HEK293 (cell line): ENCODE measurements at regions of chr6 and their contacts with region 1.

Region 1: DNA sequence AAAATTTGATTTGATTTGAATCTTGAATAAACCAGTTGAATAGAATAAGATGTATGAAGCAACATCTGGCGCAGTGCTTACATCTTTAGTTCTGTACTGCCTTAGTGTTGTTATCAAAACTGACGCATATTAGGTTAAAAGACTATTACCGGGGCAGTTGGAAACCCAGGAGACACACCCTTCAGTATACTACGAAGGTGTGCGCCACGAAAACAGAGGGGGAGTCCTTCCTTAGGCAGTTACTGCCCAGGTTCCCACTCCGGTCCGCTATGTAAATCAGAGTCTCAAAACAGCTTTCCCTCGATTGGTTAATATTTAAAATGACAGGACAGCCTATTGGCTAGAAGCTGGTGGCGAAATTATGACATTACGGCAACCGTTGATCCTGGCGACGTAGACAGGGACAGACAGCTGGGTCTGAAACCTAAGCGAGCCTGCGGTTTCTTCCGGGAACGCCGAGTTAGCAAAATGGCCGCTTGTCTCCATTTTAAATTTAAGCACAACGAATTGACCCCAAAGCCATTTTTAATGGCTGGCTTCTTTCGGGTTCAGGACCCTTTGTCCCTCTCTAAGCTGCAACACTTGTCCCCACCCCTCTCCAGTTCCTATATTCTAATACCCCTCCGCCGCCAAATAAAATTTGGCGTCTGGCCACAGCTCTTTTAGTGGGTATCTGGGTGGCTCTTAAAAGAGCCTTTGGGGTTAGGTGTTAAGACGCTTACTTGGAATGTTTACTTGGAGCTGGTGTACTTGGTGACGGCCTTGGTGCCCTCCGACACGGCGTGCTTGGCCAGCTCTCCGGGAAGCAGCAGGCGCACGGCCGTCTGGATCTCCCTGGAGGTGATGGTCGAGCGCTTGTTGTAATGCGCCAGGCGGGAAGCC is 35.8 kb downstream of the HFE start:
- H3K4me3 ChIP-seq: peak overlapping the region; percentile 50
- H3K27ac ChIP-seq: peak overlapping the region; percentile 60
- H3K4me1 ChIP-seq: no peaks in the 10 kb centered on the region
- CTCF ChIP-seq: no peak

Region 2: DNA sequence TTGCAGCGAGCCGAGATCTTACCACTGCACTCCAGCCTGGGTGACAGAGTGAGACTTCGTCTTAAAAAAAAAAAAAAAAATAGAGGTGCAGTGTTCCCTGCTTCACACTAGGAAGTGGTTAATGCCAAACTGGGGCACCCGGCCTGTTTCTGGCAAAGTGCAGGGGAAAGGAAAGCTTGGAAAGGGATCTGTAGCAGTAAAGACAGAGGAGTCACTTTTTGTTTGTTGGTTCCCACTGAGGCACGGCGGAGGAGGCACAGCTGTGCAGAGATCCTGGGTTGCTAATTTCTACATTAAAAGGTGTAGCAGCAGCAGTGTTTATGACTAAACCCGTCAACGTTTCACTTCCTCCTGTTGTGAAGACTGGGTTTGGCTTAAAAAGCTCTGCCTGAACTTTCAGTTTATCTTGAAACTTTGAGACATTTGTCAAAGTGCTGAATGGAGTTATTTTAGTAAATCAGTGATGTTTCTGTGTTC is 718.3 kb before region 1 on chr6:
- CTCF ChIA-PET with region 1: no interaction called
- POLR2A ChIA-PET with region 1: no interaction called
- H3K4me3 ChIP-seq: no peak overlapping the region
- H3K27ac ChIP-seq: no peak overlapping the region
- H3K4me1 ChIP-seq: no peaks in the 10 kb centered on the region
- CTCF ChIP-seq: no peak

Region 3: GRCh38 chr6:26031595-26032339 is 91.3 kb before region 1 on chr6:
- CTCF ChIA-PET with region 1: interaction called, 10 read pairs
- POLR2A ChIA-PET with region 1: interaction called, 100 read pairs
- H3K4me3 ChIP-seq: peak overlapping the region; percentile 71
- H3K27ac ChIP-seq: peak overlapping the region; percentile 63
- H3K4me1 ChIP-seq: peaks cover 12% of the 10 kb centered on the region
- CTCF ChIP-seq: peak; percentile 85

Region 4: DNA sequence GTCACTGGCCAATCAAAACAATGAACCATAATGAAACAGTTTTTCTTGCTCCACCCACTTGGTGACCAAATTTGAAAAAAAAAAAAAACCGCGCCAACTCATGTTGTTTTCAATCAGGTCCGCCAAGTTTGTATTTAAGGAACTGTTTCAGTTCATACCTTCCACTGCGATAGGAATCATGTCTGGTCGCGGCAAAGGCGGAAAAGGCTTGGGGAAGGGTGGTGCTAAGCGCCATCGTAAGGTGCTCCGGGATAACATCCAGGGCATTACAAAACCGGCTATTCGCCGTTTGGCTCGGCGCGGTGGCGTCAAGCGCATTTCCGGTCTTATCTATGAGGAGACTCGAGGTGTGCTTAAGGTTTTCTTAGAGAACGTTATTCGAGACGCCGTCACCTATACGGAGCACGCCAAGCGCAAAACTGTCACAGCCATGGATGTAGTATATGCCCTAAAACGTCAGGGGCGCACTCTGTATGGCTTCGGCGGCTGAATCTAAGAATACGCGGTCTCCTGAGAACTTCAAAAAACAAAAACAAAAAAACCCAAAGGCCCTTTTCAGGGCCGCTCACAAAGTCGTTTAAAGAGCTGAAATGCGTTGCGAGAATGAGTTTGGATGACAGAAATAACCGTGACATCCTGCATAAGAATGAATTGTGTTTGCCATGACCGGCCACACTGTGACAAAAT is 19.1 kb before region 1 on chr6:
- CTCF ChIA-PET with region 1: interaction called, 3 read pairs
- POLR2A ChIA-PET with region 1: interaction called, 79 read pairs
- H3K4me3 ChIP-seq: peak overlapping the region; percentile 49
- H3K27ac ChIP-seq: peak overlapping the region; percentile 4; the same call in 1 of the 2 replicates
- H3K4me1 ChIP-seq: peaks cover 6% of the 10 kb centered on the region; the same call in 1 of the 2 replicates
- CTCF ChIP-seq: peak; percentile 60

Region 5: DNA sequence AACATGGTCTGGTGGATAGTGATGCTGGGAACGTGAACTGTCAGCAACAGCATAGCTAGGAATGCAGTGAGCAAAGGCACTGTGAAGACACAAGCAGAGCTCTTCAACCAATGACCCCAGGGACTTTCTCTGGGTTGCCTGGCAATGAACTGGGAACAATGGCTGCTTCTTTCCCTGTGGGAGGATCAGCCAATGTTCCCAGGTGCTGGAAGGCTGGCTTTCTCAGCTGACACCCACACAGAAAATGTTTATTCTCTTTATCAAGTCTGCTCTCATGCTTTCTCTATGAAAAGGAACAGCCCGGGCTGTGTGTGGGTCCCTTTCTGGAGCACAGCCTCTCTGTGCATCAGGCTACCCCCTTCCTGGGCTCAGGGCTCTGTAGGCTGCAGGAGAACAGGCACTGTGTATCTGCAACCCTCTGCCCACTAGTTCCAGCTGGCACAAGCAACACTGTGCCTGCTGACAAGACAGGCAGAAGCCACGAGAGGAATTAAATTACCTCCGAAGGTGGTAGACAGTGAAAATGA is 18.4 kb after region 1 on chr6:
- CTCF ChIA-PET with region 1: no interaction called
- POLR2A ChIA-PET with region 1: interaction called, 12 read pairs
- H3K4me3 ChIP-seq: no peak overlapping the region
- H3K27ac ChIP-seq: no peak overlapping the region
- H3K4me1 ChIP-seq: no peaks in the 10 kb centered on the region
- CTCF ChIP-seq: no peak

Region 6: DNA sequence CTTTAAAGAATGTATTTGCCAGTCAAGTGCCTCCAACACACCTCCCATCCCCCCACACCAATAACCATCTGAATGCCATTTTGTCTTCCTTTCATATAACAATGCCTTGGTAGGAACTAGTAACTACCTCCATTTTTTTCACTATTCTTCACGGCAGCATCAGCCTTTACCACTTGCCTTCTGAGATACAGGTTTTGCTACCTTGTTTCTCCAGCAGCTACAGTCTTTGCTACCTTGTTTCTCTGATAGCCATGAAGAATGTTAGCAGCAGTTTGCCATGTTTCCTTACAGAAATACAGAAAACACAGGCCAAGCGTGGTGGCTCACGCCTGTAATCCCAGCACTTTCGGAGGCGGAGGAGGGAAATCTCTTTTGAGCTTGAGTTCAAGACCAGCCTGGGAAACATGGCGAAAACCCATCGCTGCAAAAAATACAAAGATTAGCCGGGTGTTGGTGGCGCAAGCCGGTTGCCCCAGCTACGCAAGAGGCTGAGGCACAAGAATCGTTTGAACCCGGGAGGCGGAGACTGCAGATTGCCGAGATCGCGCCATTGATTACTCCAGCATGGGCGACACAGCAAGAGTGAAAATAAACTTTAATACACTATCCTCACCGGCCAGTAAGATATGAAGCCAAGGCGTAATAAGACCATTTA is 65.1 kb after region 1 on chr6:
- CTCF ChIA-PET with region 1: interaction called, 4 read pairs
- POLR2A ChIA-PET with region 1: interaction called, 49 read pairs
- H3K4me3 ChIP-seq: peak overlapping the region; percentile 57
- H3K27ac ChIP-seq: peak overlapping the region; percentile 35; the same call in 1 of the 2 replicates
- H3K4me1 ChIP-seq: no peaks in the 10 kb centered on the region
- CTCF ChIP-seq: no peak

Region 7: GRCh38 chr6:26249957-26250697 is 127.1 kb after region 1 on chr6:
- CTCF ChIA-PET with region 1: no interaction called
- POLR2A ChIA-PET with region 1: interaction called, 14 read pairs
- H3K4me3 ChIP-seq: peak overlapping the region; percentile 33
- H3K27ac ChIP-seq: peak overlapping the region; percentile 80
- H3K4me1 ChIP-seq: no peaks in the 10 kb centered on the region
- CTCF ChIP-seq: no peak

Region 8: GRCh38 chr6:27132532-27133280 is 1009.7 kb after region 1 on chr6:
- CTCF ChIA-PET with region 1: no interaction called
- POLR2A ChIA-PET with region 1: interaction called, 17 read pairs
- H3K4me3 ChIP-seq: peak overlapping the region; percentile 71
- H3K27ac ChIP-seq: peak overlapping the region; percentile 95
- H3K4me1 ChIP-seq: peaks cover 10% of the 10 kb centered on the region
- CTCF ChIP-seq: no peak